Tibial artery (tissue), 4 donors: ENCODE measurements at regions of chr1 and their contacts with region 1.

Region 1: DNA sequence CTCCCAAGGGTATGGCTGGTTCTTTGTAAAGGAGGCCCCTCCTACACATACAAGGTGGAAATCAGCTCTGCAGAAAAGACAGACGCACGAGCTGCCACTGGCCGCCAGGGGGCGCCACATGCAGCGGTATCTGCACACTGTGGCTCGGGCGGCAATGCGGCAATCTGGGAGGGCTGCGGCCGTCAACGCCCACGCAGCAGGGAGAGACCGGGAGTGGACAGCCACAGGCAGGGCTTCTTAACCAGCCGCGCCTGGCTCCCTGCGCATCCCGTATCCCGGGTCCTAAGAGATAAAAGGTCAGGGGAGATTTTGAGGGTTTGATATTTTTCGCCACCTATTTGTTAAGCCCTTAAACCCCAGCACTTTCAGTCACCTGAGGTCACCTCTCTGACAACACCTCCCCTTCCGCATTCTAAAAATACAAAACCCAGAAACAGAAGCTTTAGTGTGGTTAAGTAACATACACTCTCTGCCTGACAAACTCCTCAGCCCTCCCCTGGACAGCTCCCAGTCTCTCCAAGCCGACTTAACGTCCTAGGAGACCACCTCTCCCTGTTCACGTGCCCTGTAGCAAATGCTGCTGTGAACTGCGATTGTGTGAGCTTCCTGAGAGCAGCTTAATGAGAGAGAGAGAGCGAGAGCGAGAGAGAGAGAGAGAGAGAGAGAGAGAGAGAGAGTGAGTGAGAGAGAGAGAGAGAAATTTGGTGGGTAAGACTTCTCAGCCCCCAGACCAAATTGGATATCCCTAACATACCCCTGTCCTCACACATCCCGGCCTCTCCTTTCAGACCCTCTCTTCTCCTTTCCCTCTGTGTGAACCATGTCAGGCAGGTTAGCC is 13.5 kb upstream of the KCNA2 start:
- DNase-seq: peak; percentile 76 to 77
- H3K4me3 ChIP-seq: no peak overlapping the region
- H3K27ac ChIP-seq: no peak overlapping the region
- H3K4me1 ChIP-seq: peaks cover 0 to 8% (median 6%) of the 10 kb centered on the region in 4 donors
- H3K27me3 ChIP-seq: peaks cover 0 to 51% of the 10 kb centered on the region in 2 donors
- CTCF ChIP-seq: peak; percentile 75 to 88

Region 2: GRCh38 chr1:110524311-110525251 is 95.0 kb before region 1 on chr1:
- intact Hi-C with region 1: loop called (anchors 2 kb)
- DNase-seq: no peak
- H3K4me3 ChIP-seq: no peak overlapping the region
- H3K27ac ChIP-seq: no peak overlapping the region
- H3K4me1 ChIP-seq: peaks cover 0 to 5% (median 2%) of the 10 kb centered on the region in 4 donors
- H3K27me3 ChIP-seq: peaks cover 0 to 44% of the 10 kb centered on the region in 2 donors
- CTCF ChIP-seq: peak; percentile 60 to 63

Region 3: DNA sequence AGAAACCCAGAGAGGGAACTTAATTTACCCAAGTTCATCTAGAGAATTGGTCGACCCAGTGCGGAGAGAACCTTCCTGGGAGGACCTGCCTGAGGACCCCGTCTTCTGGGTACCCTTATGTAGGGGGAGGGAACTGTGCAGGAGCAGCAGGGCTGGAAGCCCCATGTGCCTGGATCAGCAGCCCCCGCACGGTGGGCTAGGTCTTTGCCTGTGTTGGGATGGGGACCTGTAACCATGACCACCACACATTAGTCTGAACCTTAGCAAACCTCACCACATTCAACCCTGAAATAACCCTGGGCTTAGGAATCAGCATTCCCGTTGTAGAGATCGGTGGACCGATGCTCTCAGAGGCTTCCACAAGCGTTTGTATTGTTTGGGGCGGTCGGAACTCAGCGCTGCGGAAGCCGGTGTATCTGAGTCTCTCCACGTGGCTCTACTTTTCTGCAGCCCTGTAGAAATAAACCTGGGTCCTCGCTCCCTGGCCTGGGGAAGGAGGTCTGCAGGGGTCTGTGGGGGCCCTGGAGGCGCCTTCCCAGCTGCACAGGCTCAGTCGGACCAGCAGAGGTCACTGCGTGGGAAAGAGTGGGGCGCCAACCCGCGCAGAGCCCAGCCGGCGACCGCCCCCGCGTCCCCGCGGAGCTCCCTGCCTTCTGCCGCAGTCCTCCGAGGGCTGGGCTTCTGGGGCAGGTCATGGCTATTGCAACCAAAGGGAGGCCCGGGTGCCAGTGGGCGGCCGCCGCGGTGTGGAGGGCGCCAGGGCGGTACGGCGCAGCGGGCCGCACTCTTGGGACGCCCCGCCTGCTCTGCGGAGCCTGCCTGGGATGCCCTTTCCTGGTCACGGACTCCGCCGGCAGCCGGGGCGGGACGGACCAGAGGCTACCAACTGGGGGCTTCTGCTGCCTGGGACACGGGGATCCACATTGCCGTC is 64.5 kb before region 1 on chr1:
- intact Hi-C with region 1: loop called (anchors 10 kb)
- DNase-seq: peak; percentile 27 to 77
- H3K4me3 ChIP-seq: peak overlapping the region; percentile 43 to 52
- H3K27ac ChIP-seq: peak overlapping the region in 1 of 2 donors; percentile 57
- H3K4me1 ChIP-seq: peaks cover 0 to 20% (median 13%) of the 10 kb centered on the region in 4 donors
- H3K27me3 ChIP-seq: peaks cover 0 to 6% of the 10 kb centered on the region in 2 donors
- CTCF ChIP-seq: peak; percentile 66 to 70

Region 4: GRCh38 chr1:110780600-110781484 is 161.2 kb after region 1 on chr1:
- intact Hi-C with region 1: loop called (anchors 10 kb)
- DNase-seq: peak in 1 of 2 donors; percentile 53
- H3K4me3 ChIP-seq: no peak overlapping the region
- H3K27ac ChIP-seq: no peak overlapping the region
- H3K4me1 ChIP-seq: peaks cover 0 to 7% (median 0%) of the 10 kb centered on the region in 4 donors
- H3K27me3 ChIP-seq: peaks cover 0 to 38% of the 10 kb centered on the region in 2 donors
- CTCF ChIP-seq: peak; percentile 55 to 64